H1 (cell line): ENCODE measurements at regions of chr6 and their contacts with region 1.

Region 1: DNA sequence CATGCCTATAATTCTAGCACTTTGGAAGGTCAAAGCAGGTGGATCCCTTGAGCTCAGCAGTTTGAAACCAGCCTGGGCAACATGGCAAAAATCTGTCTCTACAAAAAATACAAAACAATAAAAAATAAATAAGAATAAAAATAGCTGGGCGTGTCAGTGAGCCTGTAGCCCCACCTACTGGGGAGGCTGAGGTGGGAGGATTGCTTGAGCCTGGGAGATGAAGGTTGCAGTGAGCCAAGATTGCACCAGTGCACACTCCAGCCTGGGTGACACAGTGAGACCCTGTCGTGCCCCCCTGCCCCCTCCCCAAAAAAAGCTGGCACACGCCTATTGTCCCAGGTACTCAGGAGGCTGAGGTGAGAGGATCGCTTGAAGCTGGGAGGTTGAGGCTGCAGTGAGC is 35.1 kb upstream of the SRPK1 start:
- DNase-seq: no peak
- H3K4me3 ChIP-seq: no peak overlapping the region
- H3K27ac ChIP-seq: no peak overlapping the region
- H3K4me1 ChIP-seq: peaks cover 0 to 3% (median 1%) of the 10 kb centered on the region in 4 experiments; a peak in 3 of 7 replicates
- H3K27me3 ChIP-seq: no peaks in the 10 kb centered on the region
- CTCF ChIP-seq: peak; percentile 32 to 53 (median 38)
- EP300 ChIP-seq: no peak
- POLR2A ChIP-seq: no peak
- RAD21 ChIP-seq: peak; percentile 58 to 61

Region 2: GRCh38 chr6:35640017-35640664 is 315.8 kb before region 1 on chr6:
- CTCF ChIA-PET with region 1: no interaction called
- POLR2A ChIA-PET with region 1: no interaction called
- DNase-seq: no peak
- H3K4me3 ChIP-seq: no peak overlapping the region
- H3K27ac ChIP-seq: no peak overlapping the region
- H3K4me1 ChIP-seq: peaks cover 0 to 3% (median 0%) of the 10 kb centered on the region in 4 experiments; a peak in 2 of 7 replicates
- H3K27me3 ChIP-seq: no peaks in the 10 kb centered on the region
- CTCF ChIP-seq: no peak
- EP300 ChIP-seq: no peak
- POLR2A ChIP-seq: no peak
- RAD21 ChIP-seq: no peak

Region 3: DNA sequence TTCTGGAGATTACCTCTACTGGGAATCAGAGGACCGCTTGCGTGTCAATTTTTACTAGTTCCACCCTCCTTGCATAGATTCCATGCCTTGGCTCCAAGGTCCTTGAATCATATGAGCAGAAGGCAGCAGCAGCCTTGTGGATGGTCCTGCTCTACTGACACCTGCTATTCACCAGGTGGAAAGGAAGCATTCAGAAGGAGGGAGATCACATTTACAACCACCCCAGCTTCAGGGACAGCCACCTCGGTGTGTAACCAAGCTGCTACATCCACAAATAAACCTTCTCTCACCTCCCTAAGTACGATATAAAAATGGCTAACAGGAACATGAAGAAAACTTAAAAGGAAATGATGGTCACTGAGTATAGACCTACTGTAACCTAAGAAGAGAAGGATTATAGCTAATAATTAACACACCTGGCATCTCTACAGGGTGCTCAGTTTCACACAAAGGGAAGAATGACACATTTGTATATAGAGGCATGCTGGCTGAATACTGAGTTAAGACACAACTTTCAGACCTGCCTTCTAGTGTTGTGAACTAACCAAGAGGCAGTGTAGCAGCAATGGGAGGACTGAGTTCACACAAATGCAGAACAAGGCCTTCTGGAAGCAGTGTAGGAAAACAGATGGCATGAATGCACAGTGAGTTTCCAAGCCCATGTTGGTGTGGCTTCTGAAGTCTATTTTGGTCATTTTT is 11.2 kb after region 1 on chr6:
- CTCF ChIA-PET with region 1: interaction called, 12 read pairs
- POLR2A ChIA-PET with region 1: interaction called, 4 read pairs
- DNase-seq: no peak
- H3K4me3 ChIP-seq: no peak overlapping the region
- H3K27ac ChIP-seq: no peak overlapping the region
- H3K4me1 ChIP-seq: peaks cover 0 to 5% (median 3%) of the 10 kb centered on the region in 4 experiments; a peak in 4 of 7 replicates
- H3K27me3 ChIP-seq: no peaks in the 10 kb centered on the region
- CTCF ChIP-seq: no peak
- EP300 ChIP-seq: no peak
- POLR2A ChIP-seq: no peak
- RAD21 ChIP-seq: no peak

Region 4: GRCh38 chr6:36015666-36016065 is 59.7 kb after region 1 on chr6:
- CTCF ChIA-PET with region 1: no interaction called
- POLR2A ChIA-PET with region 1: no interaction called
- DNase-seq: no peak
- H3K4me3 ChIP-seq: no peak overlapping the region
- H3K27ac ChIP-seq: no peak overlapping the region
- H3K4me1 ChIP-seq: no peaks in the 10 kb centered on the region
- H3K27me3 ChIP-seq: no peaks in the 10 kb centered on the region
- CTCF ChIP-seq: no peak
- EP300 ChIP-seq: no peak
- POLR2A ChIP-seq: no peak
- RAD21 ChIP-seq: no peak

Region 5: GRCh38 chr6:36083446-36083845 is 127.5 kb after region 1 on chr6:
- CTCF ChIA-PET with region 1: no interaction called
- POLR2A ChIA-PET with region 1: no interaction called
- DNase-seq: no peak
- H3K4me3 ChIP-seq: no peak overlapping the region
- H3K27ac ChIP-seq: no peak overlapping the region
- H3K4me1 ChIP-seq: no peaks in the 10 kb centered on the region
- H3K27me3 ChIP-seq: no peaks in the 10 kb centered on the region
- CTCF ChIP-seq: no peak
- EP300 ChIP-seq: no peak
- POLR2A ChIP-seq: no peak
- RAD21 ChIP-seq: no peak